ENCODE measurements at regions of chr3 and their contacts with region 1.

Region 1: GRCh38 chr3:87082796-87083440 is 92.0 kb upstream of the VGLL3 start:
- DNase-seq: peak; percentile 56
- H3K4me3 Mint-ChIP-seq: no peak overlapping the region
- H3K27ac Mint-ChIP-seq: no peak overlapping the region
- H3K4me1 Mint-ChIP-seq: peaks cover 18% of the 10 kb centered on the region
- H3K27me3 Mint-ChIP-seq: no peaks in the 10 kb centered on the region
- CTCF ChIP-seq: peak; percentile 28

Region 2: DNA sequence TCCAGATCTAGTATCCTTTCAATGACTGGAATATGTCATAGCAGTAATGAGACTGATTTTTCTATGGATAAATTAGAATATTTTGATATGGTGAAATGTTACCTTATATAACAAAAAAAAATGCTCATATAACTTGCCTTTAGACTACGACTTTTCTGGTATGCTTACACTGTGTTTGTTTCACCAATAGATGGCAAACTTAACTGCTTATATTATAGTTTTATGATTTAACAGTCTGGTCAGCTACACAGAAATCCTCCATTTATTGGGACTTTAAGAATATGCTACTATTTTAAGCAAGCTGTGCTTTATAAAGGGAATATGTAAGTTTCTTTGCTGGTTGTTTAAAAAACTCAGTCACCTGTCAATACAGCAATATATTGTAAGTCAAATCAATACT is 297.5 kb before region 1 on chr3:
- CTCF ChIA-PET with region 1: interaction called, 4 read pairs
- intact Hi-C with region 1: loop called (anchors 1 kb)
- DNase-seq: no peak
- H3K4me3 Mint-ChIP-seq: no peak overlapping the region
- H3K27ac Mint-ChIP-seq: no peak overlapping the region
- H3K4me1 Mint-ChIP-seq: peaks cover 7% of the 10 kb centered on the region
- H3K27me3 Mint-ChIP-seq: no peaks in the 10 kb centered on the region
- CTCF ChIP-seq: no peak

Region 3: DNA sequence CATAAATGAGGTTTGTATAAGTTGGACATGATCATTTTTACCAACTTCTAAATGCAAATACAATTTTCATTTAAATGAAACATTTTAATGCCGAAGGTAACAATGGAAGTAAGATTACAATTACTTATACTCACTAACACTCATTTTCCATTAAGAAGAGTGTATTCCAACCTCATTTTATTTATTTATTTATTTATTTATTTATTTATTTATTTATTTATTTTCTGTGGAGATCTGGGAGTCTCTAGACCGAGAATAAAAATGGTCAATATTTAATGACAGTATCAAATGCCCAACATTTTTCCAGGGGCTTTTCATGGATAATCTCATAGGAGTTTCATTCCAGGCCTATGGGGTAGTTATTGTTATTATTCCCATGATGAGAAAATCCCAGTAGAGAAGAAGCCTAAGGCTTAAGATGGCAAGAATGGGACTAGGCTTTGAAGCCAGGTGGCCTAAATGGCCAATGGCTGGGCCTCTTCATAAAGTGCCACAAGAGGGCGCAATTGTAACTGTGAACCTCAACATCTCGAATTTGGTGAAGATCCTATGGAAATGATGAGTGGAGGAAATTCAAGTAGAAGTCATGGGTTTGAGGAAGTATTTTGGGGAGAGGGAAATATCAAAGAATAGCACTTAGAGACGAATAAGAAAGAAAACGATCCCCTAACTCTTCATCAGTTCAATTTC is 113.3 kb before region 1 on chr3:
- CTCF ChIA-PET with region 1: no interaction called
- intact Hi-C with region 1: loop called (anchors 2 kb)
- DNase-seq: peak; percentile 45
- H3K4me3 Mint-ChIP-seq: no peak overlapping the region
- H3K27ac Mint-ChIP-seq: peak overlapping the region; percentile 84
- H3K4me1 Mint-ChIP-seq: peaks cover 66% of the 10 kb centered on the region
- H3K27me3 Mint-ChIP-seq: no peaks in the 10 kb centered on the region
- CTCF ChIP-seq: peak; percentile 48

Region 4: GRCh38 chr3:87006844-87007439 is 76.0 kb before region 1 on chr3:
- CTCF ChIA-PET with region 1: interaction called, 7 read pairs
- intact Hi-C with region 1: loop called (anchors 2 kb)
- DNase-seq: no peak
- H3K4me3 Mint-ChIP-seq: no peak overlapping the region
- H3K27ac Mint-ChIP-seq: no peak overlapping the region
- H3K4me1 Mint-ChIP-seq: peaks cover 8% of the 10 kb centered on the region
- H3K27me3 Mint-ChIP-seq: no peaks in the 10 kb centered on the region
- CTCF ChIP-seq: no peak